Activated T-helper 2 cell treated with anti-CD3 and anti-CD28 coated beads, Interferon-gamma antibody, Interleukin-2, Interleukin-4, amounts not matched to agents 10 μg/mL and 5 μg/mL and 100 μg/mL, durations not matched to agents 14 hours and 24 hours and 36 hours (primary cell): ENCODE measurements at regions of chr12 and their contacts with region 1.

Region 1: GRCh38 chr12:13278249-13278787 is 81.8 kb downstream of the EMP1 start:
- DNase-seq: peak; percentile 34
- H3K4me3 Mint-ChIP-seq: no peak overlapping the region
- H3K27ac Mint-ChIP-seq: no peak overlapping the region
- H3K4me1 Mint-ChIP-seq: peaks cover 3% of the 10 kb centered on the region
- H3K27me3 Mint-ChIP-seq: peaks cover 28% of the 10 kb centered on the region

Region 2: GRCh38 chr12:13358391-13358905 is 80.1 kb after region 1 on chr12:
- intact Hi-C with region 1: no loop called
- DNase-seq: no peak
- H3K4me3 Mint-ChIP-seq: no peak overlapping the region
- H3K27ac Mint-ChIP-seq: no peak overlapping the region
- H3K4me1 Mint-ChIP-seq: no peaks in the 10 kb centered on the region
- H3K27me3 Mint-ChIP-seq: peaks cover 41% of the 10 kb centered on the region

Region 3: GRCh38 chr12:13661005-13661887 is 382.9 kb after region 1 on chr12:
- intact Hi-C with region 1: loop called (anchors 10 kb)
- DNase-seq: no peak
- H3K4me3 Mint-ChIP-seq: no peak overlapping the region
- H3K27ac Mint-ChIP-seq: no peak overlapping the region
- H3K4me1 Mint-ChIP-seq: no peaks in the 10 kb centered on the region
- H3K27me3 Mint-ChIP-seq: peaks cover 1% of the 10 kb centered on the region

Region 4: DNA sequence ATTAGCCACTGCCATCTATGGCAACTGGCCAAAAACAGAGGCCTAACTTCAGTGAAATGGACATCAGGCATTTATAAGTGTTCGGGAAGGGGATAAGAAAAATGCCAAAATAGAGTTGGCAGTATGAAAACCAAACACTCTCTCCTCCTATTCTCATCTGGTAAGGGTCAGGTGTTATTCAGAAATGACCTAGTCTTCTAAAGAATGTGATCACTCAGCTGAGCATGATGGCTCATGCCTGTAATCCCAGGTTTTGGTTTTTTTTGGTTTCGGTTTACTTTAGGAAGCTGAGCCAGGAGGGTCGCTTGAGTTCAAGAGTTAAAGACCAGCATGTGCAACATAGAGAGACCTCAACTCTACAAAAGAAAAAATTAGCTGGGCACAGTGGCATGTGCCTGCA is 532.7 kb after region 1 on chr12:
- intact Hi-C with region 1: no loop called
- DNase-seq: no peak
- H3K4me3 Mint-ChIP-seq: no peak overlapping the region
- H3K27ac Mint-ChIP-seq: no peak overlapping the region
- H3K4me1 Mint-ChIP-seq: no peaks in the 10 kb centered on the region
- H3K27me3 Mint-ChIP-seq: no peaks in the 10 kb centered on the region